Right cardiac atrium (tissue), 5 donors: ENCODE measurements at regions of chr4 and their contacts with region 1.

Region 1: GRCh38 chr4:181528570-181529184 is 714.5 kb upstream of the TENM3 start:
- DNase-seq: peak; percentile 44 to 72 (median 63)
- ATAC-seq: peak; percentile 52 to 70
- H3K4me3 ChIP-seq: no peak overlapping the region
- H3K27ac ChIP-seq: no peak overlapping the region
- H3K4me1 ChIP-seq: no peaks in the 10 kb centered on the region
- H3K27me3 ChIP-seq: no peaks in the 10 kb centered on the region

Region 2: DNA sequence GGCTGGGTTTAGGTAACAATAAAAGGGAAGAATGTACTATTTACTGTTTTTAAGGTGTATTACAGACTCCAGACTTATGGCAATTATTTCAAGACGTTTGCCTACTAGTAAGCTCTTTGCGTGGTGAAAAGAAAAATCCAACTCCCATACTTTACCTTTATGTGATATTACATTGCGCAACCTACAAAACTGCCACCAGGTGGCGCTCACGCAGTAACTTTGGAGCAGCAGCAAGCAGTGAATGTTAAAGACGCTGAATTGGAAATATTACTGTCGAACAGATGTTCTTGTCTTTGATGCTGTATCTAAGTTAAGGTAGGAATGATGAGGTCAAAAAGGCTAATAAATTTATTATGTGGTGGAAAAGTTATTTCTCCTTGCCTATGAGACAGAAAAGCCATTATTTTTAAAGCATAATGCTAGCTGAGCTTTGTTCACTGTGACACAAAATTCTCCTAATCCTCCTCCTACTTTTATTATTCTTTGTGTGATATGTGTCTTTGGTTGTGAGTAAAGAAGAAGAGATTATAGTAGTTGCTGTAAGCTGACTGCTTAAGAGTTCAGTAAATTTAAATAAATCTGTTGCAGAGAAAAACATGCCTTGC is 385.3 kb before region 1 on chr4:
- intact Hi-C with region 1: loop called (anchors 2 to 5 kb)
- DNase-seq: peak; percentile 74 to 88 (median 83)
- ATAC-seq: peak; percentile 51 to 57
- H3K4me3 ChIP-seq: no peak overlapping the region
- H3K27ac ChIP-seq: no peak overlapping the region
- H3K4me1 ChIP-seq: no peaks in the 10 kb centered on the region
- H3K27me3 ChIP-seq: no peaks in the 10 kb centered on the region

Region 3: GRCh38 chr4:181261279-181261678 is 267.4 kb before region 1 on chr4:
- intact Hi-C with region 1: loop called in 3 of 4 experiments (anchors 5 to 10 kb)
- DNase-seq: no peak
- ATAC-seq: no peak
- H3K4me3 ChIP-seq: no peak overlapping the region
- H3K27ac ChIP-seq: no peak overlapping the region
- H3K4me1 ChIP-seq: no peaks in the 10 kb centered on the region
- H3K27me3 ChIP-seq: no peaks in the 10 kb centered on the region

Region 4: GRCh38 chr4:181475781-181476507 is 52.7 kb before region 1 on chr4:
- intact Hi-C with region 1: no loop called
- DNase-seq: peak in 2 of 3 donors; percentile 24 to 57
- ATAC-seq: peak; percentile 41 to 51
- H3K4me3 ChIP-seq: peak overlapping the region; percentile 56
- H3K27ac ChIP-seq: no peak overlapping the region
- H3K4me1 ChIP-seq: no peaks in the 10 kb centered on the region
- H3K27me3 ChIP-seq: no peaks in the 10 kb centered on the region

Region 5: GRCh38 chr4:181688872-181689271 is 160.2 kb after region 1 on chr4:
- intact Hi-C with region 1: no loop called
- DNase-seq: no peak
- ATAC-seq: no peak
- H3K4me3 ChIP-seq: no peak overlapping the region
- H3K27ac ChIP-seq: no peak overlapping the region
- H3K4me1 ChIP-seq: no peaks in the 10 kb centered on the region
- H3K27me3 ChIP-seq: no peaks in the 10 kb centered on the region